Heart left ventricle (tissue), 16 donors: ENCODE measurements at regions of chr10 and their contacts with region 1.

Region 1: GRCh38 chr10:52308251-52309031 is 5.6 kb upstream of the DKK1 start:
- DNase-seq: peak; percentile 37 to 65 (median 54)
- ATAC-seq: peak; percentile 78 to 94 (median 87)
- H3K4me3 ChIP-seq: peak overlapping the region in 11 of 12 donors; percentile 23 to 66 (median 54)
- H3K27ac ChIP-seq: no peak overlapping the region
- H3K4me1 ChIP-seq: peaks cover 0 to 12% (median 0%) of the 10 kb centered on the region in 12 donors
- H3K27me3 ChIP-seq: peaks cover 0 to 29% (median 0%) of the 10 kb centered on the region in 9 donors
- CTCF ChIP-seq: peak; percentile 41 to 78 (median 62)
- POLR2A ChIP-seq: no peak

Region 2: DNA sequence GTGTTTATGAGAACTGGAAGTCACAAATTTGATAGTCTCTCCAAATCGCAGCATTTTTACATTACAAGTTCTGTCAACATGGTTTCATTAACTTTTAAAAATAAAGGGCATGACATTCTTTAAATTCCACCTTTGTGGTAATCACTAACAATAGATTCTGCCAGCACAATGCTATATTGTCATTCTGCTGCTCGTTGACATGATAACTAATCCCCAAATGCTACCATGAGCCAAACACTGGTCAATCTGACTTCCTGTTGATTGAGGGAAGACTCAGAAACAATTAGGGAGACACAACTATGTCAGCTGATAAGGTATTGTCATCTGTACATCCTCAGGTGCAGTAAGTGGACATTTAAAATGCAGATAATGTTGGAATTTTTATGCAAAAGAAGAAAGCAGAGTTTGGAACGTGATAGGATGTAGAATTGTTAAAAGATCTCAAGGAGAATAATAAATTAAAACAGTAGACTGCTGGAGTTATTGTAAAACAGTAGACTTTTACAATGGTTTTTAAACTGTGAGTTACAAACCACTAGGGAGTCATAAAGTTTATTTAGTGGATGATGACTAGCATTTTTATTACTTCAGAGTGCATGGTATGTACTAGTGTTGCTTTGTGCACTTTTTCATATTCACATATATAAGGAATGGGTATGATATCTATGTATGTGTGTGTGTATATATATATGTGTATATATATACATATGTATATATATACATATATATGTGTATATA is 120.8 kb before region 1 on chr10:
- intact Hi-C with region 1: no loop called
- DNase-seq: no peak
- ATAC-seq: no peak
- H3K4me3 ChIP-seq: no peak overlapping the region
- H3K27ac ChIP-seq: no peak overlapping the region
- H3K4me1 ChIP-seq: peaks cover 0 to 2% (median 0%) of the 10 kb centered on the region in 12 donors
- H3K27me3 ChIP-seq: no peaks in the 10 kb centered on the region
- CTCF ChIP-seq: no peak
- POLR2A ChIP-seq: no peak

Region 3: GRCh38 chr10:52353960-52354394 is 45.5 kb after region 1 on chr10:
- intact Hi-C with region 1: no loop called
- DNase-seq: no peak
- ATAC-seq: no peak
- H3K4me3 ChIP-seq: no peak overlapping the region
- H3K27ac ChIP-seq: no peak overlapping the region
- H3K4me1 ChIP-seq: no peaks in the 10 kb centered on the region
- H3K27me3 ChIP-seq: no peaks in the 10 kb centered on the region
- CTCF ChIP-seq: no peak
- POLR2A ChIP-seq: no peak

Region 4: DNA sequence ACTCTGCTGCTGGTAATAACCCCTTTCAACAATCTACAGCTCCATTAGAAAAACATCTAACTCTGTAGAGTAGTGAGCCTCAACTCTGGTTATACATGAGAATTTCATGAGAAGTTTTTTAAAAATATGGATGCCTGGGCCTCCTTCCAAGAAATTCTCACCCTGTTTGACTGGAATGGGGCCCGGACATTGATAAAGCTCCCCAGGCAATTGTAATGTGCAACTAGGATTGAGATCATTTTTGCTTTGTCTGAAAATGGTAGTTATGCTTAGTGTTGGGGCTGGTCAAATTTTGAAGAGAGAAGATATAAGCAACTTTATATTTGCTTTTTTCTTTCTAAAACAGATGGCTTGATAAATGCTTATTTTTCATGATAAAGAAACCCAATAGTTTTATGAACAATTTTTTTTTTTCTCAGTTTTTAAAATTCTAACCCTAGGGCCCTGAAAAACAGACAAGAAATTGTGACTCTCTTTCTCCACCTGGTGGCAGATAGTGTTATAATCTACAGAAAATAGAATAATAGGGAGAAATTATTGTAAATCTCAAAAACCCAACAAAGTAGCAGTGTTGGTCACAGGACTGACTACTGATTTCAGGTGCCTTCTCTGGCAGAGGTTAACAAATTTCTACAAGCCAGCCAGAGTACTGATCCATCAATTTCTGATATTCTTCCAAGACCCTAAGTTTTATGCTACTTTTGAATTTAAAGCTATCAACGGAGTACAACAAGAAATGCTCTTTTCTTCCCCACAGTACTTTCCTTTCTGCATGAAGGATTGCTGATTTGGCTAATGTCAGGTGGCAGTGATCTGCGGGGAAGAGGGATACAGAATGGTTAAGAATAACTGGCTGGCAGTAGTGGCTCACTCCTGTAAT is 180.4 kb after region 1 on chr10:
- intact Hi-C with region 1: loop called (anchors 1 to 5 kb)
- DNase-seq: no peak
- ATAC-seq: no peak
- H3K4me3 ChIP-seq: no peak overlapping the region
- H3K27ac ChIP-seq: no peak overlapping the region
- H3K4me1 ChIP-seq: no peaks in the 10 kb centered on the region
- H3K27me3 ChIP-seq: no peaks in the 10 kb centered on the region
- CTCF ChIP-seq: peak; percentile 26 to 69 (median 54)
- POLR2A ChIP-seq: no peak

Region 5: DNA sequence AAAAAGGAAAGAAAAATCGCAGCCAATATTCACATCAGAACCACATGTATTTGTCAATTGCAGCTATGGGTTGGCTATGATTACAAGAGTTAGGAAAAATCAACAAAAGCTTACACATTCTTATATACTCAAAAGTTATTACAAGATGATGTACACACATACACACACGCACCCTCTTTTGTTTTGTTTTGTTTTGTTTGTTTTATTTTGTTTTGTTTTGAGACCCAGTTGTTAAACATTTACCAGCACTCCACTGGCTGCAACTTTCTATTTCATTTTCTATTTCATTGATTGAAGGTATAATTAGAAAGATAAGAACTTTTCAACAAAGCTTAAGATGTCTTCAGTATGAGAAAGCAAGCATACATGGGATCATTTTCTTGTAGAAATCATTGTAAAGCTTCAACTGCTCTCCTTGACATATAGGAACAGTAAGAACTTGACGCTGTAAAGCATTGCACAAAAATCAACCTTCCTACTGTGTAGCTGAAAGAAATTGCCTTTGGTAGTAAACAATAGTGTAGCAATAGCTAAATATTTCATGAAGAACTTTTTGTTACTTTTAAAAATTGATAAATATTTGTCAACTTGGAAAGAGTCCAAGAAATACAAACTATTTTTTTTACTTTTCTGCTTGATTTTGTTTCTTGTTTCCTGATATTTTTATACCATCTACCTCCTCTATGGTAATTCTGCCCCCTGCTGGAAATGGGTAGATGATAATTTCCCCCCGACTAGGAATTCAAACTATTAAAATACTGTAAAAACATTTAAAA is 258.2 kb after region 1 on chr10:
- intact Hi-C with region 1: loop called in 1 of 10 experiments (anchors 10 kb)
- DNase-seq: no peak
- ATAC-seq: no peak
- H3K4me3 ChIP-seq: no peak overlapping the region
- H3K27ac ChIP-seq: no peak overlapping the region
- H3K4me1 ChIP-seq: no peaks in the 10 kb centered on the region
- H3K27me3 ChIP-seq: peaks cover 0 to 3% (median 0%) of the 10 kb centered on the region in 9 donors
- CTCF ChIP-seq: peak in 8 of 12 donors; percentile 6 to 33 (median 19)
- POLR2A ChIP-seq: no peak